ENCODE measurements at regions of chr14 and their contacts with region 1.

Region 1: DNA sequence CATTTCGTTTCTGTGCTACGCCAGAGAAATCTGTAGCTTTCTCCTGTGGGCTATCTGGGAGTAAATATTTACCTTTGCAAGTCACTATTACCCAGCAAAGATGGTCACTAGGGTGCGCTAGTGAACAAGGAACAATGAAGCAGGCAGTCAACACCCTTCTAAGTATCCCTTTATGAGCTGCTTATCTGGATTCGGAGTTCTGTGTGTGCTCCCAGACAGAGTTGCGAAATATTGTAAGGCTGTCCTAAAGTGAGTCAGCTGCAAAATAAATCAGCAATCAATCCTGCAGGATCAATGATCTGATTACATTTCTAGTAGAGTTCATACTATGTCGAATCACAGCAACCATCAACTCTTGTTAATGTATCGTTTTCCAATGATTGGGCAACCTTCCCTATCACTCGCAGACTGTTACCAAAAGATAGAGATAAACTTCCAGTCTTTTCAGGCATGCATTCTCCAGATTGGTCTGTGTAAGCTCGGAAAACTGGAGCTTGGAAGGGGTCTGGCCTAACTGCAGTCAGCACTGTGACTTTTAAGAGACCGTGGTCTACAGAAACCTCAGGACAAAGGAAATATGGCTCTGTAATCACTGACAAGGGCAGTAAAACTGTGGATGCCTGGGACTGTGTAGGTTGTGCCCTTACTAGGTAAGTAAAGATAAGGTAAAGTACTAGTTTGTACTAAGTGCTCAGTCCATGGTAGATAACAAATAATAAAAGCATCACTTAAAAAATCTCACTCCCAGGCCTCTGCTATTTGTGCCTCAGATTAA is 133.5 kb downstream of the KCNK10 start:
- DNase-seq: peak; percentile 78
- ATAC-seq: peak; percentile 79
- H3K4me3 Mint-ChIP-seq: peak overlapping the region; percentile 11
- H3K27ac Mint-ChIP-seq: no peak overlapping the region
- H3K4me1 Mint-ChIP-seq: peaks cover 5% of the 10 kb centered on the region
- H3K27me3 Mint-ChIP-seq: peaks cover 15% of the 10 kb centered on the region

Region 2: GRCh38 chr14:87944987-87945604 is 244.5 kb before region 1 on chr14:
- CTCF ChIA-PET with region 1: interaction called, 71 read pairs
- POLR2A ChIA-PET with region 1: no interaction called
- DNase-seq: peak; percentile 26
- ATAC-seq: no peak
- H3K4me3 Mint-ChIP-seq: no peak overlapping the region
- H3K27ac Mint-ChIP-seq: no peak overlapping the region
- H3K4me1 Mint-ChIP-seq: peaks cover 9% of the 10 kb centered on the region
- H3K27me3 Mint-ChIP-seq: no peaks in the 10 kb centered on the region

Region 3: GRCh38 chr14:88013750-88014349 is 175.8 kb before region 1 on chr14:
- CTCF ChIA-PET with region 1: interaction called, 16 read pairs
- POLR2A ChIA-PET with region 1: no interaction called
- DNase-seq: peak; percentile 46
- ATAC-seq: no peak
- H3K4me3 Mint-ChIP-seq: no peak overlapping the region
- H3K27ac Mint-ChIP-seq: peak overlapping the region; percentile 4
- H3K4me1 Mint-ChIP-seq: peaks cover 63% of the 10 kb centered on the region
- H3K27me3 Mint-ChIP-seq: no peaks in the 10 kb centered on the region

Region 4: DNA sequence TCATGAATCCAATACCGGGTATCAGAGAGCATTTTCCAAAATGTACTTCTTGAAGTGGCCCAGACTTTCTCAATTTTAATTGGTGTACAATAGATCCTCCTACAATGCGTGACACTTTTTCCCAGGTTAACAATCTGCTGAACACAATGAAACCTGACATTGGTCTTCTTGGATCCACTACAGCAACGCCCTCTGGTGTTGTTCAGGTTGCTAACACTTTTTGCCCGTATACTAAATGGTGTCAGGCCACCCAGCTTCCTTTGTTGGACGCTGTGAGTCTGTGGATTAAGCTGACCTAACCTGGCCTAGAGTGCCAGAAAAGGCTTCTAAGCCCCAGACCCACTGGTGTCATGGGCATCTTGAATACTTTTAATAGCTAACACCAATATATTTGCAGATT is 44.3 kb after region 1 on chr14:
- CTCF ChIA-PET with region 1: interaction called, 10 read pairs
- POLR2A ChIA-PET with region 1: no interaction called
- DNase-seq: peak; percentile 24
- ATAC-seq: no peak
- H3K4me3 Mint-ChIP-seq: no peak overlapping the region
- H3K27ac Mint-ChIP-seq: no peak overlapping the region
- H3K4me1 Mint-ChIP-seq: no peaks in the 10 kb centered on the region
- H3K27me3 Mint-ChIP-seq: peaks cover 18% of the 10 kb centered on the region

Region 5: GRCh38 chr14:88385345-88386101 is 195.9 kb after region 1 on chr14 and contains the start of gene SPATA7:
- CTCF ChIA-PET with region 1: interaction called, 18 read pairs
- POLR2A ChIA-PET with region 1: no interaction called
- DNase-seq: peak; percentile 92
- ATAC-seq: peak; percentile 99
- H3K4me3 Mint-ChIP-seq: peak within 1 kb of the TSS; percentile 95
- H3K27ac Mint-ChIP-seq: peak within 1 kb of the TSS; percentile 90
- H3K4me1 Mint-ChIP-seq: peaks cover 22% of the 10 kb centered on the region
- H3K27me3 Mint-ChIP-seq: peaks cover 10% of the 10 kb centered on the region
- total RNA-seq, gene SPATA7: 3.3 to 4.3 TPM

Measured in activated CD8-positive, alpha-beta T cell treated with anti-CD3 and anti-CD28 coated beads, Interleukin-2, amount 10 ng/mL, durations not matched to agents 7 days and 5 days (primary cell).